WTC11 (cell line): ENCODE measurements at regions of chr14 and their contacts with region 1.

Region 1: GRCh38 chr14:67526676-67527459 is 6.2 kb upstream of the PLEKHH1 start:
- DNase-seq: peak; percentile 62
- ATAC-seq: peak; percentile 94
- H3K4me3 Mint-ChIP-seq: no peak overlapping the region
- H3K27ac Mint-ChIP-seq: peak overlapping the region; percentile 64; the same call in 1 of the 2 replicates
- H3K4me1 Mint-ChIP-seq: peaks cover 17% of the 10 kb centered on the region
- H3K27me3 Mint-ChIP-seq: peaks cover 2% of the 10 kb centered on the region
- CTCF ChIP-seq: peak; percentile 18; the same call in 1 of the 2 replicates

Region 2: DNA sequence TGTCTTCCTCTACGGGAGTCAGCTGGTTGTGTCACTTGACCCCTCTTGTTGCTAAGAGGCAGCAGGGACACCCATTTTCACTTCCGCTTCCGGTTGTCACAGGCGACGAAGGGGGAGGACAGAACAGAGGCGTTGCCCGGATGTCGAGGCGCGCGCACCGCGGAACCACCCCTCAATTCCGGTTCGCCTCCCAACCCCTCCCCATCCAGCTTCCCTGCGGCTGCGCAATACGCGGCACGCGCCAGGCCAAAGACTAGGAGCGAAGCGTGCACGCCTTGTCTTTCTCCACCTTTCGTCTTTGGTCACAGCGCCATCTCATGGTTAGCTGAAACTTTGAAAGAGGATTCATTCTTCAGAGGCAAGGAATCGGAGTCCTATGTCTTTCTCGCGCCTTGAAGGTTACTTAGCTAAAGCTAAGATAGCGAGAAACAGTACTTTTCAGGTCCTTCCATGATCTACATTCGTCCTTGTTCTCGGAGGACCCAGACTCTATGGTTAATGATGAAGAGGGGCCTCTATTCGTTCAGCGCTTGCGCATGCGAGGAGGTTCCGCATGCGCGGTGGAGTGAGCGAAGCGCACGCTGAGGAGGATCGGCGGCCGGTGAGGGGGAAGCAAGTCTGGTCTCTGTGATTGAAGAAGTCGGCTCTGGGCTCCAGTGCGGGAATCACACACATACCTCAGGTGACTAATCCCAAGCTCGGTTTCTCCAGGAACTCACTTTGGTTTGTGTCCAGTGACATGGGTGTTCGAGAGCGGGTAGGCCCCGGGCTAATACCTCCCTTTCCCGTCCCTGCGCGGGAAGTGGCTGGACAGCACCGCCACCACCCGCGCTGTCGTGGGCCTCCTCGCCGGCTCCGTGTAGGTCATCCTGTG is 166.9 kb before region 1 on chr14 and contains the starts of genes ATP6V1D and EIF2S1:
- CTCF ChIA-PET with region 1: interaction called, 10 read pairs
- POLR2A ChIA-PET with region 1: no interaction called
- DNase-seq: peak; percentile 99
- ATAC-seq: peak; percentile 96
- H3K4me3 Mint-ChIP-seq: peak within 1 kb of the TSS; percentile 99
- H3K27ac Mint-ChIP-seq: peak within 1 kb of the TSS; percentile 97
- H3K4me1 Mint-ChIP-seq: peaks cover 23% of the 10 kb centered on the region
- H3K27me3 Mint-ChIP-seq: no peaks in the 10 kb centered on the region
- CTCF ChIP-seq: peak; percentile 54; the same call in 1 of the 2 replicates
- total RNA-seq, gene ATP6V1D: 51.1 to 54.0 TPM (median 51.4 TPM) in 3 replicates
- total RNA-seq, gene EIF2S1: 123 to 137 TPM (median 125 TPM) in 3 replicates

Region 3: GRCh38 chr14:67457782-67458181 is 69.1 kb before region 1 on chr14:
- CTCF ChIA-PET with region 1: interaction called, 11 read pairs
- POLR2A ChIA-PET with region 1: no interaction called
- DNase-seq: peak; percentile 61
- ATAC-seq: peak; percentile 96
- H3K4me3 Mint-ChIP-seq: no peak overlapping the region
- H3K27ac Mint-ChIP-seq: 0 out of 2 replicates have a peak overlapping the region, but pooled peaks have one; percentile 36
- H3K4me1 Mint-ChIP-seq: peaks cover 18% of the 10 kb centered on the region
- H3K27me3 Mint-ChIP-seq: peaks cover 10% of the 10 kb centered on the region; the same call in 1 of the 2 replicates
- CTCF ChIP-seq: no peak

Region 4: GRCh38 chr14:67508956-67509355 is 17.9 kb before region 1 on chr14:
- CTCF ChIA-PET with region 1: interaction called, 83 read pairs
- POLR2A ChIA-PET with region 1: no interaction called
- DNase-seq: no peak
- ATAC-seq: no peak
- H3K4me3 Mint-ChIP-seq: no peak overlapping the region
- H3K27ac Mint-ChIP-seq: no peak overlapping the region
- H3K4me1 Mint-ChIP-seq: peaks cover 9% of the 10 kb centered on the region
- H3K27me3 Mint-ChIP-seq: peaks cover 28% of the 10 kb centered on the region
- CTCF ChIP-seq: no peak

Region 5: GRCh38 chr14:67557126-67557525 is 30.3 kb after region 1 on chr14:
- CTCF ChIA-PET with region 1: interaction called, 20 read pairs
- POLR2A ChIA-PET with region 1: no interaction called
- DNase-seq: no peak
- ATAC-seq: no peak; the same call in 1 of the 2 replicates
- H3K4me3 Mint-ChIP-seq: no peak overlapping the region
- H3K27ac Mint-ChIP-seq: peak overlapping the region; percentile 55; the same call in 1 of the 2 replicates
- H3K4me1 Mint-ChIP-seq: peaks cover 10% of the 10 kb centered on the region
- H3K27me3 Mint-ChIP-seq: no peaks in the 10 kb centered on the region
- CTCF ChIP-seq: no peak

Region 6: GRCh38 chr14:67599698-67600561 is 73.1 kb after region 1 on chr14 and contains the start of gene PIGH:
- CTCF ChIA-PET with region 1: interaction called, 36 read pairs
- POLR2A ChIA-PET with region 1: no interaction called
- DNase-seq: peak; percentile 92
- ATAC-seq: peak; percentile 97
- H3K4me3 Mint-ChIP-seq: peak within 1 kb of the TSS; percentile 90
- H3K27ac Mint-ChIP-seq: peak within 1 kb of the TSS; percentile 88
- H3K4me1 Mint-ChIP-seq: peaks cover 8% of the 10 kb centered on the region
- H3K27me3 Mint-ChIP-seq: peaks cover 56% of the 10 kb centered on the region
- CTCF ChIP-seq: 0 out of 2 replicates have a peak, but pooled peaks have one; percentile 22
- total RNA-seq, gene PIGH: 6.6 to 7.8 TPM (median 6.8 TPM) in 3 replicates